ENCODE measurements at regions of chr19 and their contacts with region 1.

Region 1: GRCh38 chr19:44653977-44654774 is 10.5 kb downstream of the PVR start:
- DNase-seq: peak; percentile 34

Region 2: GRCh38 chr19:44643605-44644401 is 10.4 kb before region 1 on chr19 and contains the start of gene PVR:
- CTCF ChIA-PET with region 1: no interaction called
- POLR2A ChIA-PET with region 1: interaction called, 10 read pairs
- DNase-seq: peak; percentile 90

Region 3: GRCh38 chr19:44712864-44713515 is 58.8 kb after region 1 on chr19:
- CTCF ChIA-PET with region 1: no interaction called
- POLR2A ChIA-PET with region 1: no interaction called
- DNase-seq: no peak